ENCODE measurements at regions of chr3 and their contacts with region 1.

Region 1: GRCh38 chr3:60792297-60792721 is 458.9 kb downstream of the FHIT start:
- DNase-seq: no peak

Region 2: DNA sequence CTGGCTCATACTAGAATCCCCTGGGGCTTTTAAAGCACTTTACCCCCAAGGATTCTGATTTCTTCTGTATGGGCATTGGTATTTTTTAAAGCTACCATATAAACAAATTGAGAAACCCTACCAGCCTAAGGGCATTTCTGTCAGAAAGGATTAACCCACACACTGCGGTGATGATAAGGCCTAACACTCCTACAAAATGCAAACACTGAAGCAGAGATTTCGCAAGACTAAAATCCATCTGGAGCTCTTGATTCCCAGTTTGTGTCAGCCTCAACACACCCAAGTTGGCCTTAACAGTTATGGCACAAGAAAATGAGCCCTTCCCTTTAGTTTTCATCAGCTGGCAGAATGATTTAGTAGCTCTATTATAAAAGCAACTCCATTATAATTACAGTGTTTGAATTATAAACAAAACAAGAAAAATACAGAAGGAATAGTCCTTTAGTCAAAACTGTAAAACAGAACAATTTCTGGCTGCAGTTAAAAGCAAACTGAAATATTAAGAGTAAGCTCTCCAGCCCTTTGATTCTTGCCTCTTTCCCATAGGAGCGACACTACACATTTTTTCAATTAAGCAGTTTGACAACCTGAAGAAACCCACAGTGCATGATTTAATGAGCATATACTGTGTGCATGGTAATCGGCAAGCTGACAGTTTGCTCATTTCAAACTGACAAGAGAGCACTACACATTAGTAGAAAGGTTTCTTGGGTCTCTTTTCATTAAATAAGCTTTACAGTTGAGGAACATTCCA is 17.7 kb after region 1 on chr3:
- intact Hi-C with region 1: loop called (anchors 1 kb)
- DNase-seq: no peak